ENCODE measurements at regions of chr7 and their contacts with region 1.

Region 1: GRCh38 chr7:66628361-66629140 is at the start of gene KCTD7:
- DNase-seq: peak; percentile 95
- ATAC-seq: peak; percentile 90
- H3K4me3 ChIP-seq: peak within 1 kb of the TSS; percentile 80
- H3K27ac ChIP-seq: peak within 1 kb of the TSS; percentile 66
- H3K4me1 ChIP-seq: peaks cover 8% of the 10 kb centered on the region; the same call in 1 of the 2 replicates
- H3K27me3 ChIP-seq: no peaks in the 10 kb centered on the region
- CTCF ChIP-seq: no peak
- total RNA-seq, gene KCTD7: 5.5 and 7.4 TPM in 2 replicates

Region 2: GRCh38 chr7:66083677-66084076 is 544.9 kb before region 1 on chr7:
- CTCF ChIA-PET with region 1: no interaction called
- POLR2A ChIA-PET with region 1: interaction called, 12 read pairs
- intact Hi-C with region 1: no loop called
- DNase-seq: no peak
- ATAC-seq: no peak
- H3K4me3 ChIP-seq: no peak overlapping the region
- H3K27ac ChIP-seq: no peak overlapping the region
- H3K4me1 ChIP-seq: no peaks in the 10 kb centered on the region
- H3K27me3 ChIP-seq: no peaks in the 10 kb centered on the region
- CTCF ChIP-seq: peak; percentile 30

Region 3: DNA sequence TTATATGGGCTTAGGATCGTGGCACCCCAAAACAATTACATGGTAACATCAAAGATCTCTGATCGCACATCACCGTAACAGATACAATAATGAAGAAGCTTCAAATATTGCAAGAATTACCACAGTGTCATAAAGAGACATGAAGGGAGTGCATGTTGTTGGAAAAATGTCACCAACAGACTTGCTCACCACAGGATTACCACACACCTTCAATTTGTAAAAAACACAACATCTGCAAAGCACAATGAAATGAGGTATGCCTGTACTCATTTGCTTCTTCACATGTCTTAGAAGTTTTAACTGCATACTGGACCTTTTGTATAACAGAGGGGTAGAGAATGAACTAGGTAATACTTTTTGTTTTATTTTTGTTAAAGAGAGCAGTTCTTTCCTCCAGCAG is 326.8 kb before region 1 on chr7:
- CTCF ChIA-PET with region 1: no interaction called
- POLR2A ChIA-PET with region 1: interaction called, 11 read pairs
- intact Hi-C with region 1: no loop called
- DNase-seq: no peak
- ATAC-seq: no peak
- H3K4me3 ChIP-seq: no peak overlapping the region
- H3K27ac ChIP-seq: no peak overlapping the region
- H3K4me1 ChIP-seq: peaks cover 25% of the 10 kb centered on the region
- H3K27me3 ChIP-seq: no peaks in the 10 kb centered on the region
- CTCF ChIP-seq: no peak

Region 4: DNA sequence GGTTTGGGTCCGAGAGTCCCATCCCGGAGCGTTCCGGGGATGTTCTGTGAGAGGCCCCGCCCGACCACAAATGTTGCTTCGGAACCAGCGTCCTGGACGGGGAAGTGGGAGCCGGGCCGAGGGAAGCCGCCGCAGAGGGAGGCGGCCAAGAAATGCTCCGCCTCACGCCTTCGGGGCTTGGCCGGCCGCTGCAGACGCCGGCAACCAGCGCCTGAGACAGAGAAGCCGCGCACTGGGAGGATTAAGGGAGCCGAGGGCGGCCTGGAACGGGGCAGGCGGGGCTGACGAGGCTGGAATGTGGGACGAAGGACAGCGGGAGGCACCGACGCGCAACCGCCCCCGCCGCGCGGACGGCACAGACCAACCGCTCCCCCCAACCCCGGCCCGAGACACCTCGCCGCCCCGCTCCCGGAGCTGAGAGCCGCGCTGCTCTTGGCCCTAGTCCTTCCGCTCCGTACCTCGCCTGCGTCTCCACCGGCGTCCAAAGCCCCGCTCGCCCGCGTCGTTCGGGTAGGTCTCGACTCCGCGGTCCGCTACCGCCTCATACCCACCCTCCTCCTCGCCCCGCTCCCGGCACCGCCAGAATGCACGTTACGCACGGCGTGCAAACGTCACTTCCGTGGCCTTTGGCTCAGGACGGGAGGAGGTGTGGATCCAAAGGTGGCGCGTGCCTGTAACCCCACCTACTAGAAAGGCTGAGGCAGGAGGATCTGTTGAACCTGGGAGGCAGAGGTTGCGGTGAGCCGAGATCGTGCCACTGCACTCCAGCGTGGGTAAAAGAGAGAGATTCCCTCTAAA is 36.6 kb before region 1 on chr7:
- CTCF ChIA-PET with region 1: no interaction called
- POLR2A ChIA-PET with region 1: no interaction called
- intact Hi-C with region 1: loop called (anchors 1 kb)
- DNase-seq: peak; percentile 95
- ATAC-seq: peak; percentile 85
- H3K4me3 ChIP-seq: peak overlapping the region; percentile 99
- H3K27ac ChIP-seq: peak overlapping the region; percentile 65
- H3K4me1 ChIP-seq: peaks cover 32% of the 10 kb centered on the region
- H3K27me3 ChIP-seq: no peaks in the 10 kb centered on the region
- CTCF ChIP-seq: no peak

Region 5: DNA sequence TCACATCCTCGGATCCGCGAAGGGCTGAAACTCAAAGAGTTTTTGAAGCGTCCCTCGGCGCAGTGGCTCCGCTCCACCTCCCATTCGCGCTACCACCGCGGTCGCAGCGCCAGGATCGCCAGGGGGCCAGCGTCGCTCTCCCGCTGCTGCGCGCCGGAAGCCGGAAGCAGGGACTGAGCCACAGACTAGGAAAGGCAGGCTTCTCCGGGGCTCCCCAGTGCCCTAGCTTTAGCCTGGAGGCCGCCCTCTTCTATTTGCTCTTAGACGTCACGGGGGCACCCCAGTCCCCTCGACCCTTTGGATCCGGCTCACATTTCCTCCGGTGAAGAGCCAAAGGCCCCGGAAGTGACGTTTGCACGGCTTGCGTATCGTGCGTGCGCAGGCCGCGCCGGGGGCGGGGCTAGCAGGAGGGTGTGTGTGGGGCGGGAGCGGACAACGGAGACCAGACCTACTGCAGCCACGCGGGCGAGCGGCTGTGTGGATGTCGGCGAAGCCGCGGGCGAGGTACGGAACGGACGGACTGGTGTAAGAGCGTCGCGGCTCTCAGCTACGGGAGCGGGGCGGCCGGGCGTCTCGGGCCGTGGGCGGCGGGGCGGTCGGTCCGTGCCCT is 25.7 kb after region 1 on chr7:
- CTCF ChIA-PET with region 1: no interaction called
- POLR2A ChIA-PET with region 1: interaction called, 3 read pairs
- intact Hi-C with region 1: loop called (anchors 1 kb)
- DNase-seq: peak; percentile 96
- ATAC-seq: peak; percentile 90
- H3K4me3 ChIP-seq: peak overlapping the region; percentile 73
- H3K27ac ChIP-seq: peak overlapping the region; percentile 88
- H3K4me1 ChIP-seq: 0 out of 2 replicates have a peak, but pooled peaks cover 5% of the 10 kb centered on the region
- H3K27me3 ChIP-seq: no peaks in the 10 kb centered on the region
- CTCF ChIP-seq: no peak

Region 6: DNA sequence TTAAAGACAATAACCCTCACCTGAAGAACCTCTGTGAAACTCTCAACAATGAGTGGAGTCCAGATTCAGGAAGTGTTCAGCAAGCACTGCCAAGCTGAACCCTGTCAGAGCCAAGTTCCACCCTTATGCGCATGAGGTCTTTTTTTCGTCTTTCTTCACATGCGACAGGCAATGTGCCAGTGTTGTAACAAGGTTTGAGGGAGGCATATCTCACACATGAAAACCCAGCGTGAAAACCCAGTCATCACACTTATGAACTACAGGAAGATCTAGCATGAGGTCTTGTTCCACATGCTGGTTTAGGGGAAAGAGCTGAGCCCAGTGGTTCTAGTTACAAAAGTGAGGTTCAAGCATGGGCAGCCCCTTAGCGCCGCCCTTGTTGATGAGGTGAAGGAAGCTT is 161.6 kb after region 1 on chr7:
- CTCF ChIA-PET with region 1: no interaction called
- POLR2A ChIA-PET with region 1: interaction called, 20 read pairs
- intact Hi-C with region 1: no loop called
- DNase-seq: no peak
- ATAC-seq: no peak
- H3K4me3 ChIP-seq: no peak overlapping the region
- H3K27ac ChIP-seq: no peak overlapping the region
- H3K4me1 ChIP-seq: no peaks in the 10 kb centered on the region
- H3K27me3 ChIP-seq: no peaks in the 10 kb centered on the region
- CTCF ChIP-seq: no peak

Region 7: GRCh38 chr7:67033251-67033650 is 404.7 kb after region 1 on chr7:
- CTCF ChIA-PET with region 1: no interaction called
- POLR2A ChIA-PET with region 1: interaction called, 22 read pairs
- intact Hi-C with region 1: no loop called
- DNase-seq: no peak
- ATAC-seq: no peak
- H3K4me3 ChIP-seq: no peak overlapping the region
- H3K27ac ChIP-seq: no peak overlapping the region
- H3K4me1 ChIP-seq: no peaks in the 10 kb centered on the region
- H3K27me3 ChIP-seq: no peaks in the 10 kb centered on the region
- CTCF ChIP-seq: no peak

Measured in PC-3 (cell line).